ENCODE measurements at regions of chr2 and their contacts with region 1.

Region 1: DNA sequence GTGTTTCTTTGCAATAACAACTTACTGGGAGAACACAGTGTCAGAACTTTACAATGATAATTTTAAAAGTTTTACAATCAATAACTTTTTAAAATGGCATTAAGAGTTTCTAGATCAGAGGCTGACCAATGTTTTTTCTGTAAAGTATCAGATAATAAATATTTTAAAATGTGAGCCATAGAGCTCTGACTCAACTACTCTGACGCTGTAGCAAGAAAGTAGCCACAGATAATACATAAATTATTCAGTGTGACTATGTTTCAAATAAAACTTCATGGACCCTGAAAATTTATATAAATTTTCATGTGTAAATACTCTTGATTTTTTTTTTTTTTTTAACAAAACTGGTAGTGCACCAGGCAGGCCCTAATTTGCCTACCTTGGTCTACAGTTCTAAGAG is 77.4 kb downstream of the CUL3 start:
- DNase-seq: no peak
- ATAC-seq: peak; percentile 37
- H3K4me3 ChIP-seq: no peak overlapping the region
- H3K27ac ChIP-seq: no peak overlapping the region
- H3K4me1 ChIP-seq: 0 out of 2 replicates have a peak, but pooled peaks cover 3% of the 10 kb centered on the region
- H3K27me3 ChIP-seq: no peaks in the 10 kb centered on the region
- CTCF ChIP-seq: no peak

Region 2: GRCh38 chr2:224520064-224520463 is 12.3 kb after region 1 on chr2:
- CTCF ChIA-PET with region 1: no interaction called
- POLR2A ChIA-PET with region 1: no interaction called
- intact Hi-C with region 1: loop called (anchors 2 kb)
- DNase-seq: peak; percentile 57
- ATAC-seq: peak; percentile 91
- H3K4me3 ChIP-seq: no peak overlapping the region
- H3K27ac ChIP-seq: peak overlapping the region; percentile 19; the same call in 1 of the 2 replicates
- H3K4me1 ChIP-seq: peaks cover 24% of the 10 kb centered on the region
- H3K27me3 ChIP-seq: no peaks in the 10 kb centered on the region
- CTCF ChIP-seq: no peak

Measured in PC-3 (cell line).